ENCODE measurements at regions of chrX and their contacts with region 1.

Region 1: DNA sequence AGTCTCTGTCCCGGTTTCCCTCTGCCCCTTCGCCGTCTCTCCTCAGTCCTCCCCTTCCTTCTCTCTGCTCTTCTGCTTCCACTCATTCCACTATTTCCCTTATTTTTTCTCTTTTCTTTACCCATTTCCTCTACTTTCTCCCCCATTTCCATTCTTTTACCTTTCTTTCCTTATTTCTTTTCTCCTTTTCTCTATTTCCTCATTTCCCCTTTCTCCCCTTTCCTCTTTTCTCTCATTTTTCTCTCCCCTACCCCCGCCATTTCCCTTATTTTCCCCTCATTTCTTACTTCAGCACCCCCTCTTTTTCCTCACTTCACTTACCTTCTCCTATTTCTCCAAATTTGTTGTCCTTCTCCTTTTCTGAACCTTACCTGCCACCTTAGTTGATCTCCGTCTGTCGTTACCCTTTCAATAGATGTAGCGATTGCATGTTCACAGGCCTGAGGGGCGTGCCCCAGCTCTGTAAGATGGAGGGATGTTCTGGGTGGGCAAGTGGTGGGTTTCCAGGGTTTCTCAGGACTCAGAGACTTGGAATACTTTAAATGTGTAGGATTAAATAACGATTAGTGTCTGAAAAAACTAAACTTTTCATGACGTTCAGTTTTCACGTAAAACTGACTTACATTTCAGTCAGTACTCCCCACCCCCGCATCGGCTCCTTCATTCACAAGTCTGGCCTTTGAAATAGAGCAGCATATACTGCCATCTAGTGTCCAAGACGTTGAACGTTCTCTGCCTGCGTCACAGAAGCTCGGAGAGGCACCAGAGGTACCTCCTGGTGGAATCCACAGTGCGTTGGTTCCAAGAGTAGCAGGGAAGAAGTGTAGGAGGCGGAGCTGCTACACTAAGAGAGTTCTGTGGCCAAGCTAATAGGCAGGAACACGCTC is 641 bp upstream of the NCBP2L start:
- DNase-seq: peak; percentile 88 to 90
- H3K4me3 ChIP-seq: peak overlapping the region; percentile 36
- H3K4me1 ChIP-seq: peaks cover 16% of the 10 kb centered on the region
- H3K27me3 ChIP-seq: no peaks in the 10 kb centered on the region

Region 2: GRCh38 chrX:106999002-106999975 is 777.6 kb before region 1 on chrX:
- in situ Hi-C with region 1: loop called (anchors 25 kb)
- DNase-seq: peak; percentile 76 to 80
- H3K4me3 ChIP-seq: peak overlapping the region; percentile 55
- H3K4me1 ChIP-seq: peaks cover 16% of the 10 kb centered on the region
- H3K27me3 ChIP-seq: no peaks in the 10 kb centered on the region

Region 3: GRCh38 chrX:107537815-107538214 is 239.1 kb before region 1 on chrX:
- in situ Hi-C with region 1: loop called (anchors 25 kb)
- DNase-seq: peak; percentile 43 to 83
- H3K4me3 ChIP-seq: no peak overlapping the region
- H3K4me1 ChIP-seq: no peaks in the 10 kb centered on the region
- H3K27me3 ChIP-seq: peaks cover 5% of the 10 kb centered on the region; the same call in 1 of the 2 replicates

Region 4: GRCh38 chrX:107654872-107655761 is 121.8 kb before region 1 on chrX:
- in situ Hi-C with region 1: loop called (anchors 5 kb)
- DNase-seq: peak; percentile 49 to 86
- H3K4me3 ChIP-seq: no peak overlapping the region
- H3K4me1 ChIP-seq: peaks cover 11% of the 10 kb centered on the region
- H3K27me3 ChIP-seq: no peaks in the 10 kb centered on the region

Region 5: DNA sequence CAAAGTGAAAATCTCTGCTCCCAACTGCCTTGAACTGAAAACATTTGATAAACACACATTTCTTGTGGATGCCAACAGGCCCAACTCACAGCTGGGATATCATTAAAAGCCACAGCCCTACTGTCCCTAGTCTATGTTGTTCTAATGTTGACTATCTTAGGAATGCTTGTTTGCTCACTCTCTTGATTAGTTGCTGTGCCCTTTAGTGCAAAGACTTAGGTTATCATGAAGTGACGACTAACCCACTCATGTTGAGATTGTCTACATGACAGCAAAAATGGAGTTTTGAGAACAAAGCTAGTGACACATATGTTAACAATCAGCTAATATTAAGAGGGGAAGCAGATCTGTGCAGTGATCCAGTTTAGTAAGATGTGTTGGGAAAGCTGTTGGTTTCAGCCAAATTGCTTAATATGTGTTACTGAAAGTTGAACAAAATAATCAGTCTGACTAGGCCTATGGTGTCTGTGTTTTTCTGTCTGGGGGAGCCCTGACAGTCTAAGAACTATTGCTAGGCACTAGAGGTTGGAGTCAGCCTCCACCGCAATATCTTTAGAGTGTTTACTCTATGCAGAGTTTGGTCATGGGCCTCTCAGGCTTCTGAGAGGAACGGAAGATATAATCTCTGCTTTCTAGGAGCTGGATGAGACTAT is 440.2 kb after region 1 on chrX:
- in situ Hi-C with region 1: no loop called
- DNase-seq: no peak
- H3K4me3 ChIP-seq: no peak overlapping the region
- H3K4me1 ChIP-seq: no peaks in the 10 kb centered on the region
- H3K27me3 ChIP-seq: no peaks in the 10 kb centered on the region